MCF 10A (cell line): ENCODE measurements at regions of chr5 and their contacts with region 1.

Region 1: GRCh38 chr5:74035521-74035981 is 409.6 kb downstream of the ARHGEF28 start:
- DNase-seq: peak; percentile 82
- H3K4me3 Mint-ChIP-seq: peak overlapping the region; percentile 66
- H3K27ac Mint-ChIP-seq: peak overlapping the region; percentile 11
- H3K4me1 Mint-ChIP-seq: peaks cover 37% of the 10 kb centered on the region
- H3K27me3 Mint-ChIP-seq: no peaks in the 10 kb centered on the region
- CTCF ChIP-seq: peak; percentile 45

Region 2: DNA sequence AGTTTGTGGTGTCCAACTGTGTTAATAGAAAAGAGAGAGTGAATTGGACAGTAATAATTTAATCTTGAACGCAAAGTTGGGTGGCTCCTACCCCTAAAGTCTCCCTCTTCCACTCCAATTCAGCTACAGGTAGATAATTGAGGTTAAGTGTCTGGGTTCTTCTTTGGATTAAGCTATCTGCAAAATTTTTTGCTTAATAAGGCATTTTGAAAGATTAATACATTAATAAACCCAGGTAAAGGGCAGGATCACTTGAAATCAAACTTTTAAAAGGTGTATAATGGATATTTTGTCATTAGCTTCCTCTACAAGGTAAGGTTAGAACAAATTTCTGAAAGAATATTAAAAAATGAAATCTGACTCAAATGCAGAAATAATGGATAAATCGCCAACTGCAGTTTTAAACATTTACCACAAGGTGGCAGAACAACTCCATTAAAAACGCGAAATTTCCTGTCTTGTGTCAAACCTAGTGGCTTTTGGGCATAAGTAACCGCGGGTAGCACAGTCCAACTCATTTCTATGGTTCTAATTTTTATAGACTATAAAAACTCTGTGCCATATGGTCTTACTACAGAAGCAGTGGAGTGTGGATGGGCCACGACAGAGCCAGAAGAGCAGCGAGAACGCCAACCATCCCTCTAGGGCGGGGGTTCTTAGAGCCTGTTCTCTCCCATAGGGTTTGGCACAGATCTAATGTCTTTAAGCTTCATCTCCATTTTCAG is 133.1 kb before region 1 on chr5:
- CTCF ChIA-PET with region 1: interaction called, 14 read pairs
- POLR2A ChIA-PET with region 1: interaction called, 4 read pairs
- intact Hi-C with region 1: loop called (anchors 1 kb)
- DNase-seq: peak; percentile 75
- H3K4me3 Mint-ChIP-seq: no peak overlapping the region
- H3K27ac Mint-ChIP-seq: peak overlapping the region; percentile 74
- H3K4me1 Mint-ChIP-seq: peaks cover 15% of the 10 kb centered on the region
- H3K27me3 Mint-ChIP-seq: no peaks in the 10 kb centered on the region
- CTCF ChIP-seq: peak; percentile 59

Region 3: GRCh38 chr5:73938280-73938937 is 97.1 kb before region 1 on chr5:
- CTCF ChIA-PET with region 1: no interaction called
- POLR2A ChIA-PET with region 1: interaction called, 4 read pairs
- intact Hi-C with region 1: loop called (anchors 2 kb)
- DNase-seq: peak; percentile 91
- H3K4me3 Mint-ChIP-seq: peak overlapping the region; percentile 60
- H3K27ac Mint-ChIP-seq: peak overlapping the region; percentile 98
- H3K4me1 Mint-ChIP-seq: peaks cover 47% of the 10 kb centered on the region
- H3K27me3 Mint-ChIP-seq: no peaks in the 10 kb centered on the region
- CTCF ChIP-seq: no peak

Region 4: DNA sequence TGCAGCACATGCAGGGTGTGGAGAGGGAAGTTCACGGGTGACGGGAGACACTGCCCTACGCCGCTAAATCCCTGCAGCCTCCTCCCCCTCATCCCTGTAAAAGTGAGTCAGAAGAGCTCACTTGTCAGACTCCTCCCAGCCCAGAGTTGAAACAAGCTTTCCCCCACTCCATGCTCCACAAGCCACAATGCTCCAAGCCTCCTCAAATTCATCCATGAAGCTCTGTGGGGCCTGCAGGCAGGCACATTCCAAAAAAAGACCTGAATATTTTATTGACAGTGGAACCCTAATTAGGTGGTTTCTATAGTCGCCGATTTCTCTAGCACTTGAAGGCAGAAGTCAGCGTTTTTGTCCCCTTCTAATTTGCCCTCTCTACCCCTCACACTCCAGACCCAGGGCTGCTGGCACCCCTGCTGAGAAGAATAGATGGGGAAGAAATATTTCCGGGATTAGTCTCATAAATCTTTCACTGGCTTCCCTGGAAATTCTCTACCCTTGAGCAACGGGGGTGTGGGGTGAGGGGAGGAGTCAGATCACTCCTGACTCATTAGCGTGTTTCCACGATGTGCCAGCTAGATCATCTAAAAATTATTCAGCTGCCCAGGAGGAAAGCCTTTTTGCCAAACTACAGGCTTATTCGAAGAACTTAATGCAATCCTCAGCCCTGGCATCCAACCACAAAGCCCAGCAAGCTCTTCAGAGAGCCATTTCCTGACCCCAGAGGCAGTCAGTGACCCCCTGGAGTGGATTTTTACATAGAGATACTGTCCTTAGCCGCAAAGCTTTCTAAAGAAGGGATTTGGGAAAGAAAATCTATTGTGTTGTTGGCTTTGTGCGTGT is 507.8 kb after region 1 on chr5:
- CTCF ChIA-PET with region 1: no interaction called
- POLR2A ChIA-PET with region 1: no interaction called
- intact Hi-C with region 1: loop called (anchors 1 kb)
- DNase-seq: peak; percentile 91
- H3K4me3 Mint-ChIP-seq: peak overlapping the region; percentile 58
- H3K27ac Mint-ChIP-seq: peak overlapping the region; percentile 84
- H3K4me1 Mint-ChIP-seq: peaks cover 17% of the 10 kb centered on the region
- H3K27me3 Mint-ChIP-seq: no peaks in the 10 kb centered on the region
- CTCF ChIP-seq: no peak